Right ventricle myocardium inferior (tissue), 1 donor: ENCODE measurements at regions of chr2 and their contacts with region 1.

Region 1: GRCh38 chr2:232607011-232607410 is 26.4 kb upstream of the EFHD1 start:
- DNase-seq: no peak
- ATAC-seq: no peak

Region 2: GRCh38 chr2:232668805-232669444 is 61.9 kb after region 1 on chr2:
- intact Hi-C with region 1: loop called (anchors 2 kb)
- DNase-seq: no peak
- ATAC-seq: peak; percentile 68